Left cardiac atrium (tissue), 4 donors: ENCODE measurements at regions of chr19 and their contacts with region 1.

Region 1: DNA sequence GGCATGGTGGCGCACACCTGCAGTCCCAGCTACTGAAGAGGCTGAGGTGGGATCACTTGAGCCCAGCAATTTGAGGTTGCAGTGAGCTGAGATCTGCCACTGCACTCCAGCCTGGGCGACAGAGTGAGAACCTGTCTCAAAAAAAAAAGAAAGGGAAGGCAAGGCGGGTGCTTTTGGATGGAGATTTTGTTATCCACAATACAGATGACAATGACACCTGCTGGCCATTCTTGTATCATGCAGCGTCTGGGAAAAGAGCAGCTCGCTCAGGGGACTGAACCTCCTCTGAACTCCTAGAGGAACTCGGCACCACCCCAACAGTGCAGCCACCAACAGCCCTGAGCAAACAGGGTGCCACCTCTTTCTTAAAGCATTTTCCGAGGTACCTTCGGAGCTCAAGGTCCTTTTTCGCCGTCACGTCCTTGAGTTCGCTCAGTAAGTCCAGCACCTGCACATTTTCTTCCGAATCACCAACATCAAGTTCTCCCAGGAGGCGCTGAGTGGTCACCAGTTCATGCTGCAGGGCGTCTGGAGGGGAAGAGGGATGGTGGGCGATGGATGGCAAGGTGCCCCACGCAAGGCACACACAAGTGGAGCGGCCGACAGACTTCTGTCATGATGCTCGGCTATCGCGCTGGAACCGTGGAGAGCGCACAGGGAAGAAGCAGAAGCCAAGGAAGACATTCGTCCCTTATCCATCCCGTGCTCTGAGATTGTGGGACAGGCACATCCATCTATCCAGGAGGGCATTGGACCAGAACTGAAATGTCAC is 22.6 kb downstream of the HAUS8 start:
- DNase-seq: no peak
- ATAC-seq: peak in 1 of 2 donors; percentile 44

Region 2: GRCh38 chr19:16714702-16715287 is 337.8 kb before region 1 on chr19:
- intact Hi-C with region 1: loop called in 1 of 2 experiments (anchors 10 kb)
- DNase-seq: peak; percentile 60
- ATAC-seq: peak in 1 of 2 donors; percentile 40

Region 3: GRCh38 chr19:16771618-16772017 is 281.0 kb before region 1 on chr19:
- intact Hi-C with region 1: loop called (anchors 1 to 5 kb)
- DNase-seq: peak; percentile 80
- ATAC-seq: peak; percentile 67 to 84

Region 4: GRCh38 chr19:16778796-16779411 is 273.7 kb before region 1 on chr19:
- intact Hi-C with region 1: loop called (anchors 2 to 5 kb)
- DNase-seq: peak; percentile 52
- ATAC-seq: peak in 1 of 2 donors; percentile 47

Region 5: GRCh38 chr19:16976441-16976840 is 76.2 kb before region 1 on chr19:
- intact Hi-C with region 1: no loop called
- DNase-seq: no peak
- ATAC-seq: no peak

Region 6: GRCh38 chr19:17103177-17103576 is 50.6 kb after region 1 on chr19:
- intact Hi-C with region 1: no loop called
- DNase-seq: no peak
- ATAC-seq: no peak